Esophagus squamous epithelium (tissue), 5 donors: ENCODE measurements at regions of chr3 and their contacts with region 1.

Region 1: DNA sequence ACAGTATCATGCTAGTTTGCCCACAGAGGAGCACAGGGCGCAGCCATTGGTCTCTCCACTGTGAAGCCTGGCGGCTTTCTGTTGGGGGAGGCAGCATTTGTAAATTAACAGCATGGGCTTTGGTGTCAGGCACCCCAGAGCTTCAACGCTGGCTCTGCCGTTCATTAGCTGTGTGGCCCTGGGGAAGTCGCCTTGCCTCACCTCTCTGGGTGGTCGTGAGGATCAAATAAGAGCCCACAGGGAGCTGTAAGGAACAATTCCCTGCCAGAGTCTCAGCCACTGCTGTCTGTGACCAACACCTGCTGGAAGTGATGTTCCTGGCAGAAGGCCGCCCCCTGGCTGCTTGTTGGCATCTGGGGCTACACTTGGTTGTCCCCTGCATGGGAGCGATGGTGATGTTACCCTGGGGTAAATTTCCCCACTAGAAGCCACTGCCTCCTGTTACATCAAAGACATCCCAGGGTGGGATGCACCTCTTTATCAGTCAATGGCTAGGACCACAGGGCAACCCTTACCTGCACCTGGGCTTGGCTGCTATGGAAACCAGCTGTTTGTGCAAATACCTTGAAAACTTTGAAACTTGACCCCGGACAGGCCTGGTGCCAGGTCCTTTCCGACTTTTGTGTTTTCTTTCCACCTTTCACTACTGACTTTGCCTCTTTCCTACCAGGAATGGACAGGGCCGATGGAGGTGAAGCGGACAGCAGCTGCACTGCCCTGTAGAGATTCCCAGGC is 36.9 kb downstream of the DNASE1L3 start:
- DNase-seq: no peak
- H3K4me3 ChIP-seq: no peak overlapping the region
- H3K27ac ChIP-seq: peak overlapping the region in 3 of 4 donors; percentile 64 to 76 (median 68)
- H3K4me1 ChIP-seq: peaks cover 0 to 61% (median 31%) of the 10 kb centered on the region in 3 donors
- H3K27me3 ChIP-seq: no peaks in the 10 kb centered on the region
- CTCF ChIP-seq: peak in 5 of 6 experiments; percentile 27 to 39 (median 36)
- POLR2A ChIP-seq: no peak

Region 2: DNA sequence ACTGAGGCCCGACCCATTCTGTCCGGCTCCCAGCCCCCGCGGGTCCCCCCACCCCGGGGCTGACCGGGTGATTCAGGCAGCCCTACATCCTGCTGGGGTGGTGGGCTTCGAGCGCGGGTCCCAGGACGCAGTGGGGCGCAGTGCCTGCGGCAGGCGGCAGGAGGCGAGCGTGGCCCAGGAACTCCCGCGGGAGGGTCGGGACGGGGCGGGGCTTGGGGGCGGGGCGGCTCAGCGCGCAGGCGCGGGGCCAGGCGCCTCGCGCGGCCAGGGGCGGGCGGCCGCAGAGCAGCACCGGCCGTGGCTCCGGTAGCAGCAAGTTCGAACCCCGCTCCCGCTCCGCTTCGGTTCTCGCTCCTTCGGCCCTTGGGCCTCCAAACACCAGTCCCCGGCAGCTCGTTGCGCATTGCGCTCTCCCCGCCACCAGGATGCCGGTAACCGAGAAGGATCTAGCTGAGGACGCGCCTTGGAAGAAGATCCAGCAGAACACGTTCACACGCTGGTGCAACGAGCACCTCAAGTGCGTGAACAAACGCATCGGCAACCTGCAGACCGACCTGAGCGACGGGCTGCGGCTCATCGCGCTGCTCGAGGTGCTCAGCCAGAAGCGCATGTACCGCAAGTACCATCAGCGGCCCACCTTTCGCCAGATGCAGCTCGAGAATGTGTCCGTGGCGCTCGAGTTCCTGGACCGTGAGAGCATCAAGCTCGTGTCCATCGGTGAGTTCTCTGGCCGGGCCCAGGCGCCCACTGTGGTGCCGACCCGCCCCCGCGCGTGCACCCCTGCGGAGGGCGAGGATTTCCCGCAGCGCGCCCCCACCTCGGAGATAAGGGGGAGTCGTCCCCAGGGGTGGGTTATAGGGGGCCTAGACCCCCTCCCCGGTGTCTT is 165.4 kb before region 1 on chr3 and contains the start of gene FLNB:
- intact Hi-C with region 1: loop called (anchors 5 kb)
- DNase-seq: no peak
- H3K4me3 ChIP-seq: peak within 1 kb of the TSS; percentile 57 to 97 (median 90)
- H3K27ac ChIP-seq: peak within 1 kb of the TSS; percentile 75 to 92 (median 90)
- H3K4me1 ChIP-seq: peaks cover 32 to 74% (median 36%) of the 10 kb centered on the region in 3 donors
- H3K27me3 ChIP-seq: no peaks in the 10 kb centered on the region
- CTCF ChIP-seq: peak; percentile 64 to 82 (median 78)
- POLR2A ChIP-seq: peak in 2 of 4 donors; percentile 30 to 84
- total RNA-seq, gene FLNB: 65.4 to 77.0 (median 71.5) TPM

Region 3: DNA sequence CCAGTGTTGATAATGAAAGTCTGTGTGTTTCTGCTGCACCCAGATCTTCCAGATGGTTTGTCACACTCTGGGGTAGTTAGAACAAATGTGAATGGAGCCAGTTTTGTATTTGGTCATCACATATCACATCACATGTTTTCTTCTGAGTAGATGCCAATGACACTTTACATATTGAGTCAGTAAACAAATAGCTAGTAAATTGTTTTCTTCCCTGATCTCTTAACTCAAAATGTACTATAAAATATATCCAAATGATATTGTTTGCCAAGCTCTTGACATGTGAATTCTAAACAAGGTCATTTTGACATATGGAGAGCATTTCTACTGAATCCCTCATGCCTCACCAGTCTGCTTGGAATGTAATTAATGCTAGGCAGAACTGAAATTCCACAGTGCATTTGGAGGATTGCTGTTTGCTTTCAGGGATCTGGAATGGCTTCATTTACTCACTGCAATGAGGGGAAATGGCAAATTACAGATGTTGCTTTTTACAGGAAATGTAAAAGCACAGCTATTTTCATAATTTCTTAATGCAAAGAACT is 214.8 kb after region 1 on chr3:
- intact Hi-C with region 1: no loop called
- DNase-seq: no peak
- H3K4me3 ChIP-seq: no peak overlapping the region
- H3K27ac ChIP-seq: peak overlapping the region in 3 of 4 donors; percentile 68 to 80 (median 72)
- H3K4me1 ChIP-seq: peaks cover 6 to 56% (median 18%) of the 10 kb centered on the region in 3 donors
- H3K27me3 ChIP-seq: no peaks in the 10 kb centered on the region
- CTCF ChIP-seq: no peak
- POLR2A ChIP-seq: no peak